MCF 10A (cell line): ENCODE measurements at regions of chr4 and their contacts with region 1.

Region 1: GRCh38 chr4:119212234-119212963 is at the start of gene USP53:
- DNase-seq: peak; percentile 98
- H3K4me3 Mint-ChIP-seq: peak within 1 kb of the TSS; percentile 84
- H3K27ac Mint-ChIP-seq: peak within 1 kb of the TSS; percentile 94
- H3K4me1 Mint-ChIP-seq: peaks cover 29% of the 10 kb centered on the region
- H3K27me3 Mint-ChIP-seq: no peaks in the 10 kb centered on the region
- CTCF ChIP-seq: no peak
- total RNA-seq, gene USP53: 47.4 and 68.0 TPM in 2 replicates

Region 2: GRCh38 chr4:118981839-118982381 is 230.5 kb before region 1 on chr4:
- CTCF ChIA-PET with region 1: interaction called, 5 read pairs
- POLR2A ChIA-PET with region 1: interaction called, 10 read pairs
- intact Hi-C with region 1: no loop called
- DNase-seq: peak; percentile 85
- H3K4me3 Mint-ChIP-seq: no peak overlapping the region
- H3K27ac Mint-ChIP-seq: no peak overlapping the region
- H3K4me1 Mint-ChIP-seq: peaks cover 5% of the 10 kb centered on the region
- H3K27me3 Mint-ChIP-seq: no peaks in the 10 kb centered on the region
- CTCF ChIP-seq: peak; percentile 75

Region 3: GRCh38 chr4:119041951-119042560 is 170.3 kb before region 1 on chr4:
- CTCF ChIA-PET with region 1: interaction called, 28 read pairs
- POLR2A ChIA-PET with region 1: interaction called, 82 read pairs
- intact Hi-C with region 1: loop called (anchors 1 kb)
- DNase-seq: peak; percentile 86
- H3K4me3 Mint-ChIP-seq: no peak overlapping the region
- H3K27ac Mint-ChIP-seq: no peak overlapping the region
- H3K4me1 Mint-ChIP-seq: peaks cover 7% of the 10 kb centered on the region
- H3K27me3 Mint-ChIP-seq: no peaks in the 10 kb centered on the region
- CTCF ChIP-seq: peak; percentile 63

Region 4: GRCh38 chr4:119103263-119103662 is 109.1 kb before region 1 on chr4:
- CTCF ChIA-PET with region 1: interaction called, 7 read pairs
- POLR2A ChIA-PET with region 1: interaction called, 82 read pairs
- intact Hi-C with region 1: loop called (anchors 1 kb)
- DNase-seq: peak; percentile 93
- H3K4me3 Mint-ChIP-seq: peak overlapping the region; percentile 43
- H3K27ac Mint-ChIP-seq: peak overlapping the region; percentile 89
- H3K4me1 Mint-ChIP-seq: peaks cover 35% of the 10 kb centered on the region
- H3K27me3 Mint-ChIP-seq: no peaks in the 10 kb centered on the region
- CTCF ChIP-seq: no peak

Region 5: DNA sequence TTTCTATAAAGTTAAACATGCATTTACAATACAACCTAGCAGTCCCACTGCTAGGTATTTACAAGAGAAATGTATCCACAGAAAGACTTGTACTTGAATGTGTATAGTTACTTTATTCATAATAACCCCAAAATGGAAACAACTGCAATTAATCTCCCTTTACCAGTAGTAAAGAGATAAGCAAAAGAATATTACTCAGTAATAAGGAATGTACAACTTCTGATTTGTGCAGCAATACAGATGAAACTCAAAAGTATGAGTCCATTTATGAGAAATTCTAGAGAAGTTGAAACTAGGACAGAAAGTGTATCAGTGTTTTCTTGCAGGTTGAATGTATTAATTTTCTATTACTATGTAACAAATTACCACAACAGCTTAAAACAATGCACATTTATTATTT is 15.3 kb after region 1 on chr4:
- CTCF ChIA-PET with region 1: interaction called, 7 read pairs
- POLR2A ChIA-PET with region 1: interaction called, 28 read pairs
- intact Hi-C with region 1: no loop called
- DNase-seq: no peak
- H3K4me3 Mint-ChIP-seq: no peak overlapping the region
- H3K27ac Mint-ChIP-seq: no peak overlapping the region
- H3K4me1 Mint-ChIP-seq: peaks cover 7% of the 10 kb centered on the region
- H3K27me3 Mint-ChIP-seq: no peaks in the 10 kb centered on the region
- CTCF ChIP-seq: no peak

Region 6: GRCh38 chr4:119300101-119300978 is 87.9 kb after region 1 on chr4:
- CTCF ChIA-PET with region 1: interaction called, 3 read pairs
- POLR2A ChIA-PET with region 1: interaction called, 50 read pairs
- intact Hi-C with region 1: no loop called
- DNase-seq: peak; percentile 92
- H3K4me3 Mint-ChIP-seq: peak overlapping the region; percentile 93
- H3K27ac Mint-ChIP-seq: peak overlapping the region; percentile 97
- H3K4me1 Mint-ChIP-seq: peaks cover 12% of the 10 kb centered on the region
- H3K27me3 Mint-ChIP-seq: no peaks in the 10 kb centered on the region
- CTCF ChIP-seq: no peak